ENCODE measurements at regions of chr12 and their contacts with region 1.

Region 1: GRCh38 chr12:27014085-27014858 is at the start of gene TM7SF3:
- DNase-seq: peak; percentile 99
- ATAC-seq: peak; percentile 80
- H3K4me3 ChIP-seq: peak within 1 kb of the TSS; percentile 89
- H3K27ac ChIP-seq: peak within 1 kb of the TSS; percentile 51
- H3K4me1 ChIP-seq: peaks cover 40% of the 10 kb centered on the region
- H3K27me3 ChIP-seq: no peaks in the 10 kb centered on the region
- CTCF ChIP-seq: peak; percentile 98
- total RNA-seq, gene TM7SF3: 109 and 114 TPM in 2 replicates

Region 2: GRCh38 chr12:26629864-26630263 is 384.4 kb before region 1 on chr12:
- CTCF ChIA-PET with region 1: no interaction called
- POLR2A ChIA-PET with region 1: no interaction called
- intact Hi-C with region 1: loop called (anchors 5 kb)
- DNase-seq: peak; percentile 41
- ATAC-seq: peak; percentile 28; the same call in 1 of the 2 replicates
- H3K4me3 ChIP-seq: 0 out of 2 replicates have a peak overlapping the region, but pooled peaks have one; percentile 8
- H3K27ac ChIP-seq: peak overlapping the region; percentile 46
- H3K4me1 ChIP-seq: peaks cover 55% of the 10 kb centered on the region
- H3K27me3 ChIP-seq: no peaks in the 10 kb centered on the region
- CTCF ChIP-seq: peak; percentile 79

Region 3: GRCh38 chr12:26830783-26831551 is 183.3 kb before region 1 on chr12:
- CTCF ChIA-PET with region 1: no interaction called
- POLR2A ChIA-PET with region 1: no interaction called
- intact Hi-C with region 1: no loop called
- DNase-seq: no peak
- ATAC-seq: no peak
- H3K4me3 ChIP-seq: no peak overlapping the region
- H3K27ac ChIP-seq: no peak overlapping the region
- H3K4me1 ChIP-seq: peaks cover 6% of the 10 kb centered on the region; the same call in 1 of the 2 replicates
- H3K27me3 ChIP-seq: no peaks in the 10 kb centered on the region
- CTCF ChIP-seq: no peak

Region 4: DNA sequence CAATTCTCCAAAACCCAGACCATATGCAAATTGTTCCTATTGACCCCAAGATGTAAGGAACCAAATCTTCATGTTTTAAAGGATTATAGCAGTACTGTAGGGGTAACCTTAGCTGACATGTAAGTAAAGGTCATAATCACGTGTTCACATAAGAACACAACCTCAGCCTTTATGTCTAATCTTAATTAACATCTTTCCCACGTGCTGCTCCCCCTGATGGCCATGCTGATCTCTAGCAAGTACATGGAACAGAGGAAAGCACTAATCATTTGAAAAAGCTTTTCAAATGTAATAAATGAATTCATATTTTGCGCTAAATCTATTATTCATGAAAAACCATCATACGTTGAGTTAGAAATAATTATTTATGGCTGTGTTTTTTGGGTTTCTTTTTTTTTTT is 150.8 kb before region 1 on chr12:
- CTCF ChIA-PET with region 1: no interaction called
- POLR2A ChIA-PET with region 1: interaction called, 16 read pairs
- intact Hi-C with region 1: no loop called
- DNase-seq: peak; percentile 28
- ATAC-seq: no peak
- H3K4me3 ChIP-seq: no peak overlapping the region
- H3K27ac ChIP-seq: no peak overlapping the region
- H3K4me1 ChIP-seq: no peaks in the 10 kb centered on the region
- H3K27me3 ChIP-seq: no peaks in the 10 kb centered on the region
- CTCF ChIP-seq: peak; percentile 60

Region 5: DNA sequence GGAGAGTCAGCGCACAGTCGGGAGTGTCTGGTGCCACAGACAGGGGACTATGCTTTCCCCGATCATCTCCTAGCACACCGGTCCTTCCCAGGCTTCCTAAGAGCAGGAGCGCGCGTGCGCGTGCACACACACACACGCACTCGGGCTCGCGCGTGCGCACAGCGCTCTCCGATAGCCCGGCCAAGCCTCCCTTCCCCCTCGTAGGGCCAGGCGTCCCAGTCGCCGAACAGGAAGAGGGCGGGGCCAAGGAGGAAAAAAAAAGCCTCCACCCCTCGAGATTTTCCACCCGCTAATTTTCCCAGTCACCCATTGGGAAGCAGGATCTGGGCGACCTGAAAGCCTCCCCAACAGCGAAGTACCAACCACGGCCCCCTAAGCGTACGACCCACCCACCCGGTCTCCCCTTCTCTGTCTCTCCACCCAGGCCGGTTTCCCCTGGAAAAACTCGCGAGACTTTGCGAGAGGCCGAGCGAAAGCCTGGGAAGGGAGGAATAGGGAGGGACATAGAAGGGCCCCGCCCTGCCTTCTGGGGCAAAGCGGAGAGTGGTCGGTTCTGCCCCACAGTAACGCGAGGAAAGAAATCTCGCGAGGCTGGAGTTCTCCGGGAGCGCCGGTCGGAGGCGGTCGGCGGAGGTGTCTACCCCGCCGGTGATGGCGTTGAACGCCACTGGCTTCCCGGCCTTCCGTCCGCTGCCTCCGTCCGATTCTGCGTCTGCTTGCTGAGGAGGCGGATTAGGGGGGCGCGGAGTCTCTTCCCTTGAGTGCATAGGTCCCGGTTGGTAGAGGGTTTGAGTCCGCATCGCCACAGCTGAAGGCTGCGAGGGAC is 76.2 kb before region 1 on chr12 and contains the starts of genes FGFR1OP2 and INTS13:
- CTCF ChIA-PET with region 1: interaction called, 4 read pairs
- POLR2A ChIA-PET with region 1: no interaction called
- intact Hi-C with region 1: loop called (anchors 1 kb)
- DNase-seq: peak; percentile 100
- ATAC-seq: peak; percentile 94
- H3K4me3 ChIP-seq: peak within 1 kb of the TSS; percentile 76
- H3K27ac ChIP-seq: peak within 1 kb of the TSS; percentile 85
- H3K4me1 ChIP-seq: peaks cover 39% of the 10 kb centered on the region
- H3K27me3 ChIP-seq: no peaks in the 10 kb centered on the region
- CTCF ChIP-seq: no peak
- total RNA-seq, gene FGFR1OP2: 43.4 and 74.3 TPM in 2 replicates
- total RNA-seq, gene INTS13: 61.8 and 74.1 TPM in 2 replicates

Region 6: DNA sequence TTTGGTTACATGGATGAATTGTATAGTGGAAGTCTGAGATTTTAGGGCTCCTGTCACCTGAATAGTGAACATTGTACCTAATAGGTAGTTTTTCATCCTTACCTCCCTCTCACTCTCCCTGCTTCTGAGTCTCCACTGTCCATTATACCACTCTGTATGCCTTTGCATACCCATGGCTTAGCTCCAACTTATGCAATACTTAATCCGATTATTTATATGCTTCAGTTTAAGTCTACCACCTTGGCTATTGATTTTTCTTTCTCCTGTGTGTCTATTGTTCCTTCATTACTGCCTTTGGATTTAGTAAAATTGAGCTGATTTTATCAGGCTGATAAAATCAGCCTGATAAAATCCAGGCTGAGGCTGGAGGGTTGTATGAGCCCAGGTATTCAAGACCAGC is 98.6 kb after region 1 on chr12:
- CTCF ChIA-PET with region 1: no interaction called
- POLR2A ChIA-PET with region 1: no interaction called
- intact Hi-C with region 1: no loop called
- DNase-seq: peak; percentile 15
- ATAC-seq: no peak
- H3K4me3 ChIP-seq: no peak overlapping the region
- H3K27ac ChIP-seq: no peak overlapping the region
- H3K4me1 ChIP-seq: peaks cover 6% of the 10 kb centered on the region
- H3K27me3 ChIP-seq: no peaks in the 10 kb centered on the region
- CTCF ChIP-seq: no peak

Region 7: GRCh38 chr12:27142101-27142721 is 127.9 kb after region 1 on chr12:
- CTCF ChIA-PET with region 1: no interaction called
- POLR2A ChIA-PET with region 1: no interaction called
- intact Hi-C with region 1: loop called (anchors 1 kb)
- DNase-seq: peak; percentile 96
- ATAC-seq: peak; percentile 98
- H3K4me3 ChIP-seq: no peak overlapping the region
- H3K27ac ChIP-seq: no peak overlapping the region
- H3K4me1 ChIP-seq: no peaks in the 10 kb centered on the region
- H3K27me3 ChIP-seq: no peaks in the 10 kb centered on the region
- CTCF ChIP-seq: peak; percentile 99

Region 8: DNA sequence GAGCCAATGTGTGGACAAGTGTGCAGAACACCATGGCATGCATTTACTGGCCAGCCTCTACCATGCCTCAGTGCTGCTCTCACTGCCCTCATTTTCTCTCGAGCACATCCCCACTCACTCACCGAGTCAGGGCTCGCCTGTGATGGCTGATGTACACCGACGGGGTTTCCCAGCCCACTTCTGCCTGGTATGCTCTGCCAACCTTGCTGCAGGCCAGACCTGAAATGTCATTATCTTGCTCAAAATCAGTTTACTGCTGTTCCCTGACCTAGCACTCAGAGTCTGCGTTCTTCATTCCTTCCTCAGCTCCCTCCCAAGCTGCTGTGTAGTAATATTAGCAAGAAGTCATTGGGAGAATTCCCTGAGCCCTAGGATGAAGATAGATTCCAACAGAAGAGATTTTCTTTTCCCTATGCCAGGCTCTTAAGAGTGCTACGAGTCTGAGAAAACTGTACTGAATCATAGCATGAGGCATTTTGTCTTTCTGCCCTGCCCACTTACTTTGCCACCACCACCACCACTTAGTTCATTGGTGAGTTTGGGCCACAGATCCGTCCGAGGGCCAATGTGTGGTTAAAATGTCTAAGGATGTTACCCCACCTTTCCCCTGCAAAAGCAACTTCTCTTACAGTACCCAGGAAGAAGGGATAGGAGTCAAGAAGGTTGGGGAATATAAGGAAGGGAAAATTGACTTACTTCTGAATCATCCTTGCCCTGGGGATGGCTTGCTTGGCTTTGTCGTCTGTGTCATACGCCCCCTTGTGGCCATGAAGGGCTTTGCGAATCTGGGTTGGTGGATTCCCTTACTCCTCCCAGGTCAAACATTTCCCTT is 369.4 kb after region 1 on chr12:
- CTCF ChIA-PET with region 1: no interaction called
- POLR2A ChIA-PET with region 1: no interaction called
- intact Hi-C with region 1: loop called (anchors 5 kb)
- DNase-seq: peak; percentile 98
- ATAC-seq: peak; percentile 86
- H3K4me3 ChIP-seq: no peak overlapping the region
- H3K27ac ChIP-seq: peak overlapping the region; percentile 72
- H3K4me1 ChIP-seq: peaks cover 24% of the 10 kb centered on the region
- H3K27me3 ChIP-seq: no peaks in the 10 kb centered on the region
- CTCF ChIP-seq: peak; percentile 98